T-cell (primary cell): ENCODE measurements at regions of chr7 and their contacts with region 1.

Region 1: DNA sequence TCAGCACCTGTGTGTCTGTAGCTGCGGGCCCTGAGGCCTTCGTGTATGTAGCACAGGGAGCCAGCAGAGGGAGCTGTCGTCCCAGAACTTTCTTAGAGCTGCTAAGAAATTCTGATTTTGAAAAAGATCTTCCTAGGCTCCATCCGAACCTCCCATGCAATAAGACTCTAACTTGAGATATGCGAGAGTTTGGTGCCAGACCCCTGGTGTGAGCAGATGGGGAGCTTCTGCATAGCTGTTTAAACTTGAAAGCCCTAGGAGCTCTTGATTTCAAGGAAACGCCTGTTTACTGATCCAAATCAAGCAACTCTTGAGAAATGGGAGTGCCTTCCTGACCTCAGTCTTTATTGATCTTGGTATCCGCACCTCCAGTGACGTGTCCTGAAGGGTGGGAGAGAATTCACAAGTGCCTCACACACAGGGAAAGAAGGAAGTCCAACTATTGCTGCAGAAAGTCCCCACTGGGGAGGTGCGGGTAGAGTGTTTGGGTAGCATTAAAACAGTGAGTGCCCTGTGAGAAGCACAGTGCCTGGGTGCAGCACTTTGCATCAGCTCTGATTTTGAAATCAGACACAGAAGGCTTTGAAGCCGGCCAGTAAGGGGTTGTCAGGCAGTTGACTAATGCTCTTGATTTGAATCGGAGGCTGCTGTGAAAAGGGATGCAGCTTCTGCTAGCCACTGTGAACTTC is 66.4 kb upstream of the STRIP2 start:
- DNase-seq: peak; percentile 19 to 83 (median 65)
- ATAC-seq: peak; percentile 83 to 88 (median 86)
- H3K4me3 ChIP-seq: peak overlapping the region in 1 of 2 donors; percentile 2
- H3K4me3 Mint-ChIP-seq: peak overlapping the region; percentile 11 to 65 (median 55)
- H3K27ac ChIP-seq: no peak overlapping the region
- H3K27ac Mint-ChIP-seq: peak overlapping the region in 1 of 2 donors; percentile 12
- H3K4me1 ChIP-seq: peaks cover 4 to 11% of the 10 kb centered on the region in 2 experiments
- H3K4me1 Mint-ChIP-seq: peaks cover 13 to 22% (median 20%) of the 10 kb centered on the region in 3 donors
- H3K27me3 ChIP-seq: no peaks in the 10 kb centered on the region
- H3K27me3 Mint-ChIP-seq: no peaks in the 10 kb centered on the region

Region 2: GRCh38 chr7:129468087-129468486 is 100.2 kb after region 1 on chr7:
- CTCF ChIA-PET with region 1: interaction called, 27 to 68 read pairs
- POLR2A ChIA-PET with region 1: no interaction called
- DNase-seq: no peak
- ATAC-seq: no peak
- H3K4me3 ChIP-seq: no peak overlapping the region
- H3K4me3 Mint-ChIP-seq: no peak overlapping the region
- H3K27ac ChIP-seq: no peak overlapping the region
- H3K27ac Mint-ChIP-seq: no peak overlapping the region
- H3K4me1 ChIP-seq: no peaks in the 10 kb centered on the region
- H3K4me1 Mint-ChIP-seq: no peaks in the 10 kb centered on the region
- H3K27me3 ChIP-seq: no peaks in the 10 kb centered on the region
- H3K27me3 Mint-ChIP-seq: no peaks in the 10 kb centered on the region

Region 3: DNA sequence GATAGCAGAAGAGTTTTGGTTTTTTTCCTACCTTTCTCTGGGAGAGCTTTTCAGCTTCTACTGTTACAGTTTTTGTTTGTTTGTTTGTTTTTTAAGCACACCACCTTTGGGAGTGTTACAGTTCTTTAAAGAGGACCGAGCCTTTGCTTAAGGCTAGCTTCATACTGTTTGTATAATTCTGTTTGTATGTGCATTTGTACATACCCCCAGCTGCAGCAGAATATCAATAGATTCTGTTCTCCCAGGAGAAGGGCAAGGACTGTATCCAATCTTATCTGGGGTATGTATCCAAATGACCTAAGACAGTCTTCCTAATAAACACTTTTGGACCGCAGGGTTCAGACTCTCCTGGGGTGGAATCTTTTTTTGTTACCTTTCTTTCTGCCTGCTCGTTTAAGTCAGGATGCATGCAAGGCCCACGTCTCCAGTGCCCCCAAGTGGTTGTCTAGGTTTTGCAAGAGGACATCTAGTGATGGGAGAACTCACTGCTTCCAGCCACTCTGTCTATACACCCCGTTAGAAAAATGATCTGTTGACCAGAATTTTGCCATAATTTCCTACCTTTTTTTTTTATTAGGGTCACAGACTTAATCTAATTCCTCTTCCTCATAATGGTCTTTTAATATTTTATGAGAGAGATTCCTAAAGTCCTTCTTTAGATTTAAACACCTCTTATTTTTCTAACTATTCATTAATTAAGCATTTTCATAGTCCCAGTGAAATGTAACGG is 267.6 kb after region 1 on chr7:
- CTCF ChIA-PET with region 1: interaction called in 1 of 2 experiments, 15 read pairs
- POLR2A ChIA-PET with region 1: no interaction called
- DNase-seq: peak; percentile 12 to 82 (median 63)
- ATAC-seq: peak; percentile 95 to 98 (median 96)
- H3K4me3 ChIP-seq: no peak overlapping the region
- H3K4me3 Mint-ChIP-seq: no peak overlapping the region
- H3K27ac ChIP-seq: no peak overlapping the region
- H3K27ac Mint-ChIP-seq: peak overlapping the region; percentile 45 to 70
- H3K4me1 ChIP-seq: peaks cover 0 to 11% of the 10 kb centered on the region in 2 experiments
- H3K4me1 Mint-ChIP-seq: peaks cover 53 to 59% (median 59%) of the 10 kb centered on the region in 3 donors
- H3K27me3 ChIP-seq: no peaks in the 10 kb centered on the region
- H3K27me3 Mint-ChIP-seq: no peaks in the 10 kb centered on the region